Activated naive CD4-positive, alpha-beta T cell treated with anti-CD3 and anti-CD28 coated beads for 36 hours (primary cell): ENCODE measurements at regions of chr3 and their contacts with region 1.

Region 1: DNA sequence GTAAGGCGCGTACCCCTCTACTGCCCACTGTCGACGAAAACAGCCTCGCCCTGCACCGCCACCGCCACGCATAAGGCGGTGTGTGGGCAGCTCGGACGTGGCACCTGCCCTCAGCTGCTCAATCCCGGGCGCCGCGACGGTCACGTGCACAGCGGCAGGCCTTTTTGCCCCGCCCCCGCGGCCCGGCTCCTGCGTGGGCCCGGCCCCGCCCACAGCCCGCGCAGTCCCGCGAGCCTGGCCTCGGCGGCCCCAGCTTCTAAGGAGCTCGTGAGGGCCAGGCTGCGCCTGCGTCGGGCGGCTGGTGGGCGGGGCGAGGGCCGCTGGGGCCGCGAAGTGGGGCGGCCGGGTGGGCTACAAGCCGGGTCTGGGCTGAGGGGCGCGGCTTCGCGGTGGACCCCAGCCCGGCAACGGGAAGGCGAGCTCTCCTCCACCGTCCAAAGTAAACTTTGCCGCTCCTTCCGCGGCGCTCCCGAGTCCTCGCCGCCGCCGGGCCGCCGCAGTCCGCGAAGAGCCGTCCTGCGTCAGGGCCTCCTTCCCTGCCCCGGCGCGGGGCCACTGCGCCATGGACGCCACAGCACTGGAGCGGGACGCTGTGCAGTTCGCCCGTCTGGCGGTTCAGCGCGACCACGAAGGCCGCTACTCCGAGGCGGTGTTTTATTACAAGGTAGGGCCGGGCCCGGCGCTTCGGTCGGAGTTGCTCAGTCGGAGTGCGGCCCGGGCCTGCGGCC is at the start of gene CAPN7:
- DNase-seq: peak; percentile 92
- H3K4me3 Mint-ChIP-seq: peak within 1 kb of the TSS; percentile 82
- H3K27ac Mint-ChIP-seq: peak within 1 kb of the TSS; percentile 77
- H3K4me1 Mint-ChIP-seq: peaks cover 23% of the 10 kb centered on the region
- H3K27me3 Mint-ChIP-seq: no peaks in the 10 kb centered on the region
- total RNA-seq, gene CAPN7: 23.7 to 26.1 TPM

Region 2: GRCh38 chr3:14651440-14652251 is 554.5 kb before region 1 on chr3 and contains the start of gene CCDC174:
- CTCF ChIA-PET with region 1: no interaction called
- intact Hi-C with region 1: loop called (anchors 2 kb)
- DNase-seq: peak; percentile 97
- H3K4me3 Mint-ChIP-seq: peak within 1 kb of the TSS; percentile 99
- H3K27ac Mint-ChIP-seq: peak within 1 kb of the TSS; percentile 98
- H3K4me1 Mint-ChIP-seq: peaks cover 38% of the 10 kb centered on the region
- H3K27me3 Mint-ChIP-seq: no peaks in the 10 kb centered on the region
- total RNA-seq, gene CCDC174: 16.1 to 20.7 TPM

Region 3: GRCh38 chr3:15108082-15108545 is 98.0 kb before region 1 on chr3:
- CTCF ChIA-PET with region 1: interaction called, 38 read pairs
- intact Hi-C with region 1: no loop called
- DNase-seq: peak; percentile 76
- H3K4me3 Mint-ChIP-seq: no peak overlapping the region
- H3K27ac Mint-ChIP-seq: no peak overlapping the region
- H3K4me1 Mint-ChIP-seq: no peaks in the 10 kb centered on the region
- H3K27me3 Mint-ChIP-seq: no peaks in the 10 kb centered on the region

Region 4: DNA sequence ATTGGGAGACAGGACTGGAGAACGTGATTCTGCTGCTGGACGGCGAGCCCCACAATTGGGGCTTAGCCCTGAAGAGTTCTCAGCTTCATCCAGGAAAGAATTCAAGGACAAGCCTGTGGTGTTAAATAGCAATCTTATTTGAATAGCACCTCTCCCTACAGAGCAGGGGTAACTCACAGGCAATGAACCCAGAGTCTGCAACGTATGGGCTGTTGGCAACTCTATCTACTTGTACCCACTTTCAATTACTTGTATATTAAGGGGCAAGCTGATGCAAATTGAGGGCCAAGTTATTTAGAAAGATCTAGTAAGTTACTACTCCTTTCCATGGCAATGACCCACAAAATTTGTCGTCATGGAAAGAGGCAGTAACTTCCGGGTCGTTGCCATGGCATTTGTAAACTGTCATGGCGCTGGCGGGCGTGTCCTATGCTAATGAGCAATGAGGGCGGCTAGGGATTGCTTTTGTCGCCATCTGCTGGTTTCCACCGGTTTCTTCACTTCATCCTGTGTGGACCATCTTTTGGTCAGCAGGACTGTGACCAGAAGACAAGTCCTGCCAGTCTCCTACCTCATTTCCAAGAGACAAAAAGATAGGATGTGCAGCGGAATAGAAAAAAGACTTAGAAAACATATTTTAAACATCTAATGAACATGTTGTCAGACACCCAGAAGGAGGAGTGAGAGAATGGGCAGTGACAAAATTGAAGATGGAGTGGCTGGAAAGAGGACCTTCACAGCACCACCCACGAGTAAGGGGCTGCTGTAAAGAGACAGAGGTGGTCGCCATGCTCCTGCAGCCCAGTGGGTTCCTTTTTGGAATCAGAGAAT is 172.1 kb after region 1 on chr3:
- CTCF ChIA-PET with region 1: interaction called, 17 read pairs
- intact Hi-C with region 1: loop called (anchors 1 kb)
- DNase-seq: peak; percentile 97
- H3K4me3 Mint-ChIP-seq: no peak overlapping the region
- H3K27ac Mint-ChIP-seq: peak overlapping the region; percentile 24
- H3K4me1 Mint-ChIP-seq: peaks cover 5% of the 10 kb centered on the region
- H3K27me3 Mint-ChIP-seq: no peaks in the 10 kb centered on the region

Region 5: GRCh38 chr3:15557511-15557946 is 351.4 kb after region 1 on chr3:
- CTCF ChIA-PET with region 1: interaction called, 24 read pairs
- intact Hi-C with region 1: loop called (anchors 1 kb)
- DNase-seq: peak; percentile 77
- H3K4me3 Mint-ChIP-seq: no peak overlapping the region
- H3K27ac Mint-ChIP-seq: no peak overlapping the region
- H3K4me1 Mint-ChIP-seq: peaks cover 16% of the 10 kb centered on the region
- H3K27me3 Mint-ChIP-seq: no peaks in the 10 kb centered on the region

Region 6: DNA sequence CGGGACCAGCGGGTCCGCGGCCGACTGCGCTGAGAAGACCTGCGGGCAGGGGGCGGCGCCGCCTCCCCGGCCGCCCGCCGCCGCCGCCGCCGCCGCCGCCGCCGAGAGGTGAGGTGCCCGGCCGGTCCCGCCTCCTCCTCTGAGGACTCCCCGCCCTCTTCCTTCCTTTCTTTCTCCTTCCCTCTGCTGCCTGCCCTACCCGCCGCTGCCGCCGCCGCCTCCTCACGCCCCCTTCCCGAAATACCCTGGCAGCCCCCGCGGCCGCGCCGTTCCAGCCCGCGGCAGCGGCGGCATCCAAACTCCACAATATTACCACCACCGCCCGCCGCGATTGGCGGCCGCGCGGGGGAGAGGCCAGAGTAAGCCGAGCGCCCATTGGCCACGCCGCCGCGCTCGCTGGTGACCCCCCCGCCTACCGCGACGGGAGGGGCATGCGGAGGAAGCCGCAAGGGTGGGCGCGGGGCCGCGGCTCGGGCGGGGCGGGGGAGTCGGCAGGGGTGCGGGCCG is 653.5 kb after region 1 on chr3:
- CTCF ChIA-PET with region 1: no interaction called
- intact Hi-C with region 1: loop called (anchors 2 kb)
- DNase-seq: peak; percentile 75
- H3K4me3 Mint-ChIP-seq: peak overlapping the region; percentile 98
- H3K27ac Mint-ChIP-seq: peak overlapping the region; percentile 91
- H3K4me1 Mint-ChIP-seq: peaks cover 40% of the 10 kb centered on the region
- H3K27me3 Mint-ChIP-seq: no peaks in the 10 kb centered on the region